Mucosa of descending colon (tissue), 3 donors: ENCODE measurements at regions of chr17 and their contacts with region 1.

Region 1: GRCh38 chr17:50626037-50626574 is 8.6 kb upstream of the ABCC3 start:
- DNase-seq: peak; percentile 71 to 75 (median 74)
- ATAC-seq: no peak
- H3K4me3 ChIP-seq: no peak overlapping the region
- H3K4me1 ChIP-seq: peaks cover 26% of the 10 kb centered on the region
- CTCF ChIP-seq: peak; percentile 31

Region 2: GRCh38 chr17:50681263-50682210 is 55.4 kb after region 1 on chr17:
- intact Hi-C with region 1: loop called in 1 of 2 experiments (anchors 10 kb)
- DNase-seq: peak in 1 of 3 donors; percentile 71
- ATAC-seq: peak; percentile 34
- H3K4me3 ChIP-seq: no peak overlapping the region
- H3K4me1 ChIP-seq: peaks cover 35% of the 10 kb centered on the region
- CTCF ChIP-seq: no peak

Region 3: DNA sequence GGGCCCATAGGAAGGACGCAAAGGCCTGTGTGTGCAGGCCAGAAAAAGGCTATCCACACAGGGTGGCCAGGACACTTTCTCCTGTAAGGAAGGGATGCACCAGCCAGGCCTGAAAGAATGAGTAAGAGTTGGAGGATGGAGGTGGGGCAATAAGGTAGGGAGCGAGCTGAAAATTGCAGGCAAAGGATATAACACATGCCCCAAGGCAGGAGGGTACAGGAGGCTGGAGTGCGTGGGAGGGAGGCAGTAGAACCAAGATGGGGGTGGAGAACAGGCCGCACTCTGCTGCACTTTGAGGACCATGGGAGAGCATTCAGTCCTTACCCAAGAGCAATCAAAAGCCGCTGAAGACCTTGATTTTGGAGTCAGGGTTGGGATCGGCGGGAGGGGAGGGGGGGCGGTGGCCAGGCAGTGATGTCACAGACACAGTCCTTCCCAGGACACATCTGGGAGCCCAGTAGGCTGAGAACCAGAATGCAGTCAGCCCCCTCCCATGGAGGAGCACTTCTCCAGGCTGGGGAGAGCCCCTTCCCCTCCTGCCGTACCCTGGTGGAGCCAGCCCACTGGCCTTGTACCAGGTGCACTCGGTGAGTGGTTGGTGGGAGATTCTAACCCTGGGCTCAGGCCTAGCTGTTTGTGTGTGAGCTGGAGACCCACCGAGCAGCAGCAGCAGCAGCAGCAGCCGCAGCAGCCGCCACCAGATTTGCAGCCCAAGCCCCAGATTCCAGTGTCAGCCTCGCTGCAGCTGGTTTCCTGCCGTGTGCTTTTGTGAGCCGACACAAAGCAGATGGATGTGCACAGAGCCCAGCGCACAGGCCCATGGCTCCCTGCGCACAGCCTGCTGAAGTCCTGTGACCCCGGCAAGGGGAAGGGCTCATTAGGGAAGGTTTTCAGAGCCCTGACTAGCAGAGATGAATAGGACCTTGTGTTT is 64.1 kb after region 1 on chr17:
- intact Hi-C with region 1: loop called (anchors 5 to 10 kb)
- DNase-seq: no peak
- ATAC-seq: no peak
- H3K4me3 ChIP-seq: no peak overlapping the region
- H3K4me1 ChIP-seq: peaks cover 72% of the 10 kb centered on the region
- CTCF ChIP-seq: no peak

Region 4: GRCh38 chr17:50703221-50703620 is 77.1 kb after region 1 on chr17:
- intact Hi-C with region 1: no loop called
- DNase-seq: no peak
- ATAC-seq: no peak
- H3K4me3 ChIP-seq: no peak overlapping the region
- H3K4me1 ChIP-seq: peaks cover 14% of the 10 kb centered on the region
- CTCF ChIP-seq: no peak